ENCODE measurements at regions of chr4 and their contacts with region 1.

Region 1: DNA sequence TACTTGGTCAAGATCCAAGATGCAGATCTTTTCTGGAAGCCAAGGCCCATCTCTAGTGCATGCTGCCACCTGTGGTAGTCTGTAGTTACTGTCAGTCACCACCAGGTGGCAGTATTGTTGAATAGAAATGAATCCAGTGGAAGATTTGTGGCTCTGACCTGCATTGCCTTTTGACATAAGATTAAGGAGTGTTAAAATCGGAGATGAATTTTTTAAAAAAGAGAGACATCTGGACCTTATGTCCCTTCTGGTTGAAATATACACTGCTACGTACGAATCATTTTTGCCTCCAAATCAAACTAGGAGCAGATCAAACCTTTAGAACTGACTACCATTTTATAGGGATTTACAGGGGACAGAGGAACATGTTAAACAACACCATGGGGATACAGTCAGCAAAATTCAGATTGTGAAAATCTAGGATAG is 46.9 kb upstream of the RHOH start:
- DNase-seq: peak; percentile 79 to 90 (median 89)
- H3K4me3 ChIP-seq: no peak overlapping the region
- H3K27ac ChIP-seq: no peak overlapping the region
- H3K4me1 ChIP-seq: peaks cover 0 to 9% (median 5%) of the 10 kb centered on the region in 4 experiments
- H3K27me3 ChIP-seq: no peaks in the 10 kb centered on the region

Region 2: GRCh38 chr4:39591290-39591689 is 558.7 kb before region 1 on chr4:
- CTCF ChIA-PET with region 1: no interaction called
- POLR2A ChIA-PET with region 1: no interaction called
- DNase-seq: no peak
- H3K4me3 ChIP-seq: no peak overlapping the region
- H3K27ac ChIP-seq: no peak overlapping the region
- H3K4me1 ChIP-seq: no peaks in the 10 kb centered on the region
- H3K27me3 ChIP-seq: no peaks in the 10 kb centered on the region

Region 3: GRCh38 chr4:40114206-40114605 is 35.8 kb before region 1 on chr4:
- CTCF ChIA-PET with region 1: no interaction called
- POLR2A ChIA-PET with region 1: no interaction called
- DNase-seq: no peak
- H3K4me3 ChIP-seq: no peak overlapping the region
- H3K27ac ChIP-seq: no peak overlapping the region
- H3K4me1 ChIP-seq: peaks cover 0 to 4% (median 0%) of the 10 kb centered on the region in 4 experiments
- H3K27me3 ChIP-seq: no peaks in the 10 kb centered on the region

Region 4: GRCh38 chr4:40160258-40160657 is 10.3 kb after region 1 on chr4:
- CTCF ChIA-PET with region 1: interaction called, 16 read pairs
- POLR2A ChIA-PET with region 1: no interaction called
- DNase-seq: no peak
- H3K4me3 ChIP-seq: no peak overlapping the region
- H3K27ac ChIP-seq: no peak overlapping the region
- H3K4me1 ChIP-seq: no peaks in the 10 kb centered on the region
- H3K27me3 ChIP-seq: no peaks in the 10 kb centered on the region

Region 5: GRCh38 chr4:40316782-40317635 is 167.0 kb after region 1 on chr4:
- CTCF ChIA-PET with region 1: interaction called, 22 read pairs
- POLR2A ChIA-PET with region 1: no interaction called
- DNase-seq: peak; percentile 83 to 93 (median 88)
- H3K4me3 ChIP-seq: peak overlapping the region in 5 of 7 experiments; percentile 24 to 67 (median 51)
- H3K27ac ChIP-seq: peak overlapping the region; percentile 98 to 99
- H3K4me1 ChIP-seq: peaks cover 20 to 68% (median 46%) of the 10 kb centered on the region in 4 experiments
- H3K27me3 ChIP-seq: no peaks in the 10 kb centered on the region

Region 6: DNA sequence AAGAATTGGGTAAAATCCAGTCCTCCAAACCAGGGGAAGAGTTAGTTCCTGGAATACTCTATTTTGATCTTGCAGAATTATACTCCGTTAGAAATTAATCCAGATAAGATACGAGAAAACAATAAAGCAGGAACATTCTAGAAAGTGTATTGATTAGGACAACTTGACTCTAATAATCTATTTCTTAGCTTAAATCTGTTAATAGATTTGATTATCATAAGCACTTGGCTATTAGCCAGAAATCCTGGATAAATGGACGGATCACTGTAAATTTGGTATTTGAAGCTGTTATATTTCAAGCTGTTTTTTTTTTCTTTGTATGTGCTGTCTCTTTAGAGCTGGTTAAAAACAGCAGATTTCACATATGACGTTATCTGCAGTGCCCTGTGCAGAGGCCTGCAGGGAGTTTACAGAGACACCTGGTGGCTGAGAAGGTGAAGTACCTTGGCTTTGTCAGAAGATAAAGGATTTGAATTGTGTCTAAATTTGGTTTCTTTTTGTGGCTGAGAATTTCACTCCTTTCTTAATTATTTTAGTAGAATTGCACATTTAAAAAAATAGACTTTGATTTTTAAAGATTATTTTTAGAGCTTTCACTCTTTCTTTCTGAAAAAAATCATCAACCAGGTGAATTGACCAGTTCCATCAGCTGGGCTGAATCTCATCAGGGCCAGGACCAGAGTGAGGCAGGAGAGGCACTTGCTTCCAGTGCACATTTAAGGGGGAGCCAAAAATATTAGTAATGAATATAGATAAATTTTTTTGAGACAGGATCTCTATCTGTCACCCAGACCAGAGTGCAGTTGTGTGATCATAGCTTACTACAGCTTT is 175.4 kb after region 1 on chr4:
- CTCF ChIA-PET with region 1: interaction called, 17 read pairs
- POLR2A ChIA-PET with region 1: no interaction called
- DNase-seq: peak; percentile 81 to 92 (median 91)
- H3K4me3 ChIP-seq: no peak overlapping the region
- H3K27ac ChIP-seq: no peak overlapping the region
- H3K4me1 ChIP-seq: peaks cover 3 to 45% (median 38%) of the 10 kb centered on the region in 4 experiments
- H3K27me3 ChIP-seq: no peaks in the 10 kb centered on the region

Measured in common myeloid progenitor, CD34-positive (primary cell).